ENCODE measurements at regions of chr1 and their contacts with region 1.

Region 1: DNA sequence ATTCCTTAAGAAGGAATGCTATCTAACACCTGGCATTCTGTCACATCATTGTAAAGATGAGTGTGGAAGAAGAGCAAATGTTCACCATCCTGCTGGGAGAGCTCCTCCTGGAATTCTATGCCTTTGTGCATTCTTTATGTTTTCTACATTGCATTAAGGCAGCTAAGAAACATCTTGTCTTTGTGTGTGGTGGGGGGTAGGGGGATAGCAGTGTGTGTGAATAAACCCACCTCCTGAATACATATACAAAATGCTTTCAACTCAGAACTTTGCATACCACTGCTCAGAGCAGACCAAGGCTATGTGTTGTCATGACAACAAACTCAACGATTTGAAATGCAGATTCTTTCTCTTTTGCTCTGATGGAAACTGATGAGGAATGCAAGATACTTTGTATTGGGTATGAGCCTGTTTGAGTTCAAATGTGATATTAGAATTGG is 193.6 kb upstream of the KAZN start:
- DNase-seq: no peak
- ATAC-seq: no peak
- H3K4me3 ChIP-seq: no peak overlapping the region
- H3K27ac ChIP-seq: no peak overlapping the region
- H3K4me1 ChIP-seq: no peaks in the 10 kb centered on the region
- H3K27me3 ChIP-seq: no peaks in the 10 kb centered on the region
- CTCF ChIP-seq: no peak
- EP300 ChIP-seq: no peak
- POLR2A ChIP-seq: no peak
- RAD21 ChIP-seq: no peak

Region 2: DNA sequence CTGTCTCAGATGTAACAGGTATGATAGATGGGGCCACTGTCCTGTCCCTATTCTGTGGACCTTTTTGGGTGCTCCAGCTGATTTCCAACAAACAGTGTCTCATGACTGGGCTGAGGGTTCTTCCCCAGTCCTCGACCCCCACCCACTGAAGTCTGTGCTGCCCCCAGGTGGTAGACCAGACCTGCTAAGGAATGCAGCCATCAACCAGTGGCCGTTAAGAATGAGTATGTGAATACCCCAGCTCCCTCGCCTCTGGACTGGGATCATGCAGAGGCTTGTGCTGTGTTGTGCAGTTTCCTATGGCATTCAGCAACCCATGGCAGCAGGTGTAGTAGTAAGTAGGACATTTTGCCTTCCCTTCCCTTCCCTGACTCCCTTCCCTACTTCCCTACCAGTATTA is 10.5 kb after region 1 on chr1:
- CTCF ChIA-PET with region 1: no interaction called
- POLR2A ChIA-PET with region 1: interaction called, 10 read pairs
- in situ Hi-C with region 1: no loop called
- intact Hi-C with region 1: no loop called
- DNase-seq: peak; percentile 34 to 54 (median 40)
- ATAC-seq: peak; percentile 70
- H3K4me3 ChIP-seq: no peak overlapping the region
- H3K27ac ChIP-seq: no peak overlapping the region
- H3K4me1 ChIP-seq: peaks cover 7 to 9% of the 10 kb centered on the region in 2 experiments; a peak in 4 of 5 replicates
- H3K27me3 ChIP-seq: no peaks in the 10 kb centered on the region
- CTCF ChIP-seq: peak; percentile 53 to 65 (median 63); a peak in 5 of 6 replicates
- EP300 ChIP-seq: no peak
- POLR2A ChIP-seq: no peak
- RAD21 ChIP-seq: peak; percentile 11 to 69; a peak in 2 of 4 replicates

Measured in K562 (cell line).